ENCODE measurements at regions of chr18 and their contacts with region 1.

Region 1: GRCh38 chr18:21600526-21601410 is at the start of gene ESCO1:
- DNase-seq: peak; percentile 98 to 99 (median 99)
- H3K4me3 ChIP-seq: peak within 1 kb of the TSS; percentile 88 to 99 (median 94)
- H3K27ac ChIP-seq: peak within 1 kb of the TSS; percentile 78 to 96
- H3K4me1 ChIP-seq: peaks cover 14 to 40% (median 31%) of the 10 kb centered on the region in 4 experiments
- H3K27me3 ChIP-seq: no peaks in the 10 kb centered on the region

Region 2: GRCh38 chr18:21612125-21612991 is 11.6 kb after region 1 on chr18 and contains the start of gene SNRPD1:
- CTCF ChIA-PET with region 1: interaction called, 51 read pairs
- POLR2A ChIA-PET with region 1: interaction called, 12 read pairs
- DNase-seq: peak; percentile 88 to 93 (median 93)
- H3K4me3 ChIP-seq: peak within 1 kb of the TSS; percentile 51 to 98 (median 83)
- H3K27ac ChIP-seq: peak within 1 kb of the TSS; percentile 64 to 90
- H3K4me1 ChIP-seq: peaks cover 2 to 20% (median 9%) of the 10 kb centered on the region in 4 experiments
- H3K27me3 ChIP-seq: no peaks in the 10 kb centered on the region

Region 3: DNA sequence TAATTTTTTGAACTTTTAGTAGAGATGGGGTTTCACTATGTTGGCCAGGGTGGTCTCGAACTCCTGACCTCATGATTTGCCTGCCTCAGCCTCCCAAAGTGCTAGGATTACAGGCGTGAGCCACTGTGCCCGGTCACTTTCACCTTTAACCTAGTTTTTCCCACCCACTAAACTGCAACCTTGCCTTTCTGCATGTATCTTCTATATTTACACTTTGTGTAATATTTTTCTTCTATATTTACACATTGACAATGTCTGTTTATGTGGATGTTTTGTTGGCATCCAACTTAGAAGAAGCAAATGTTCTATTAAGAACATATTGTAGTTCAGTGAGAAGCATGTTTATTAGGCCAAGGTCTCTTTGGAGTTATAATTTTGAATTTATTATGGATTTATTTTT is 38.1 kb after region 1 on chr18:
- CTCF ChIA-PET with region 1: no interaction called
- POLR2A ChIA-PET with region 1: no interaction called
- DNase-seq: no peak
- H3K4me3 ChIP-seq: no peak overlapping the region
- H3K27ac ChIP-seq: no peak overlapping the region
- H3K4me1 ChIP-seq: no peaks in the 10 kb centered on the region
- H3K27me3 ChIP-seq: no peaks in the 10 kb centered on the region

Region 4: GRCh38 chr18:21897811-21898210 is 297.0 kb after region 1 on chr18:
- CTCF ChIA-PET with region 1: no interaction called
- POLR2A ChIA-PET with region 1: no interaction called
- DNase-seq: peak; percentile 19 to 49 (median 34)
- H3K4me3 ChIP-seq: no peak overlapping the region
- H3K27ac ChIP-seq: no peak overlapping the region
- H3K4me1 ChIP-seq: peaks cover 0 to 4% (median 2%) of the 10 kb centered on the region in 4 experiments
- H3K27me3 ChIP-seq: peaks cover 0 to 12% (median 6%) of the 10 kb centered on the region in 5 experiments